Panc1 (cell line): ENCODE measurements at regions of chr4 and their contacts with region 1.

Region 1: GRCh38 chr4:185019456-185020292 is 1.4 kb downstream of the HELT start:
- DNase-seq: no peak
- ATAC-seq: peak; percentile 82
- H3K4me3 ChIP-seq: peak overlapping the region; percentile 33 to 54
- H3K27ac ChIP-seq: no peak overlapping the region
- H3K4me1 ChIP-seq: no peaks in the 10 kb centered on the region; the same call in 1 of the 2 replicates
- H3K27me3 ChIP-seq: peaks cover 12% of the 10 kb centered on the region
- CTCF ChIP-seq: no peak

Region 2: DNA sequence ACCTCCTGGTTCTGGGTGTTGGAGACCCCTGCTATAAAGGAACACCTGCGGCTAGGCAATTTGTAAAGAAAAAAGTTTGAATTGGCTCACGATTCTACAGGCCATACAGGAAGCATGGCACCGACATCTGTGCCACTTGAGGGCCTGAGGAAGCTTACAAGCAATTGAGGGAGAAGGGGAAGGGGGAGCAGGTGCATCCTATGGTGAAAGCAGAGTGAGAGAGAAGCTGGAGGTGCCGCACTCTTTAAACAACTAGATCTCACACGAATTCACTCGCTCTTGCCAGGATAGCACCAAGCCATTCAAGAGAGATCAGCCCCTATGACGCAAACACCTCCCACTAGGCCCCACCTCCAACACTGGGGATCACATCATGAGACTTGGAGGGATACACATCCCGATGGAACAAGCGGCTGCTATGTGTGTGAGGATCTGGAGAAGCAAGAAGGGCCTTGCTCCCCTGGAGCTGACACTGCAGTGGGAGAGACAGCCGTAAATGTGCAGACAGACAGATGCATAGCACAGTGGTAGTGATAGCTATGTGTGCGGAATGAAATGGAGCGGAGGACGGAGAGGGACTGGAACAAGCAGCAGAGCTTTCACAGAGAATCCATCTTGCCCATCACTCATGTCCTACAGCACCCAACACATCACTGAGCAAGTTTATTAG is 62.1 kb before region 1 on chr4:
- CTCF ChIA-PET with region 1: interaction called, 13 read pairs
- POLR2A ChIA-PET with region 1: no interaction called
- in situ Hi-C with region 1: no loop called
- intact Hi-C with region 1: no loop called
- DNase-seq: no peak
- ATAC-seq: no peak
- H3K4me3 ChIP-seq: no peak overlapping the region
- H3K27ac ChIP-seq: no peak overlapping the region
- H3K4me1 ChIP-seq: no peaks in the 10 kb centered on the region
- H3K27me3 ChIP-seq: no peaks in the 10 kb centered on the region
- CTCF ChIP-seq: no peak